AG04449 (cell line): ENCODE measurements at regions of chr10 and their contacts with region 1.

Region 1: DNA sequence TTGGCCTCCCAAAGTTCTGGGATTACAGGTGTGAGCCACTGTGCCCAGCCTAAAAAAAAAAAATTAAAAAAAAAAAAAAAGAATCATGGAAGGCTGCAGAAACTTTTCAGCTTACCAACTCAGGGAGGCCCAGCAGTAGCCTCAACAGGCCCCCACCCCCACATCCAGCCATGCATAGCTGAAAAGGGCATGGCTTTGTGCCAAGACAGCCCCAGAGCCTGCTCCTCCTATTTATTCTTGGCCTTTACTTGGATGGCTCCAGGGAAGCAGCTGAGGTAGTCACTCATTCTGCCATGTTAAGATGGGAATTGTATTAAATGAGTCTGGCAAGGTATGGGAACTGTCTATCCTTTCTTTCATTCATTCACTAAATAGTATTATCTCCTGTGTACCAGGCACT is 13.7 kb upstream of the CNNM2 start:
- DNase-seq: no peak
- H3K4me3 ChIP-seq: no peak overlapping the region
- CTCF ChIP-seq: no peak

Region 2: DNA sequence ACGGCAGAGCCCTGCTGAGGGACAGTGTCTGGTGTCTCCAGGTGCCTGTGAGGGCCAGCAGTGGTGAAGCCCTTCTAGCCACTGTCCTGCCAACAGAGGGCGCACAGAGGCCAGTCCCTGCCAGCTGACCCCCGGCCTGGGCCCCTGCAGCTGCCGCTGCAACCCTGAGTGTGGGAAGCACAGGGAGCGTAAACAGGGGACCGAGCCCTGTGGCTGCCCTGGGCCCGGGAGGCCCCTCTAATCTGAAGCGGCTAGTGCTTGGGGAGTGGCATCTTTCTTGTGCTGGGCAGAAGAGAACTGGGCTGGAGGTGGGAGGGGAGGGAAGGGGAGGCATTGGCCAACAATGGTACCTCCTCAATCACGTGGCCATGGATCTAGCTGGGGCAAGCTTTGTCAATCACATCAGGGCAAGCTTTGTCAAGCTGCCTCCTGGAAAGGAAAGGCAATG is 225.5 kb before region 1 on chr10:
- CTCF ChIA-PET with region 1: interaction called, 14 read pairs
- POLR2A ChIA-PET with region 1: no interaction called
- DNase-seq: no peak
- H3K4me3 ChIP-seq: no peak overlapping the region
- CTCF ChIP-seq: peak; percentile 79

Region 3: GRCh38 chr10:102743588-102744373 is 160.6 kb before region 1 on chr10 and contains the start of gene WBP1L:
- CTCF ChIA-PET with region 1: interaction called, 25 read pairs
- POLR2A ChIA-PET with region 1: no interaction called
- DNase-seq: peak; percentile 97
- H3K4me3 ChIP-seq: peak within 1 kb of the TSS; percentile 100
- CTCF ChIP-seq: no peak

Region 4: GRCh38 chr10:102822222-102822621 is 82.1 kb before region 1 on chr10:
- CTCF ChIA-PET with region 1: interaction called, 355 read pairs
- POLR2A ChIA-PET with region 1: no interaction called
- DNase-seq: no peak
- H3K4me3 ChIP-seq: no peak overlapping the region
- CTCF ChIP-seq: no peak

Region 5: GRCh38 chr10:102853944-102854694 is 50.2 kb before region 1 on chr10 and contains the start of gene BORCS7:
- CTCF ChIA-PET with region 1: interaction called, 18 read pairs
- POLR2A ChIA-PET with region 1: no interaction called
- DNase-seq: peak; percentile 85
- H3K4me3 ChIP-seq: peak within 1 kb of the TSS; percentile 98
- CTCF ChIP-seq: no peak

Region 6: DNA sequence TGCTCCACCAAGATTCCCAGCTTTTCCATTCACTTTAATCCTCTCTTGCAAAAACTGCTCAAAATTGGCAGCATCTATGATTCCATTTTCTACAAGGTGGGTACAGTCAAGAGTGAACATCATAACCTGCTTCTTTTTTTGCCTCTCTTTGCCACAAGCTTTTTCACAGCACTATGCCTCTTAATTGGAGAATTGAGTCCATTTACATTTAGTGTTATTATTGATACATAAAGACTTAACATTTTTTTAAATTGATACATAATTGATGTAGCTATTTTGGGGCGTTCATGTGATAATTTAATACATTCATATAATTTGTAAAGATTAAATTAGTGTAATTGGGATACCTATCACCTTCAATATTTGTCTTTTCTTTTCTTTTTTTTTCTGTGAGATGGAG is 16.3 kb before region 1 on chr10:
- CTCF ChIA-PET with region 1: interaction called, 32 read pairs
- POLR2A ChIA-PET with region 1: no interaction called
- DNase-seq: no peak
- H3K4me3 ChIP-seq: no peak overlapping the region
- CTCF ChIP-seq: no peak